Naive thymus-derived CD4-positive, alpha-beta T cell (primary cell): ENCODE measurements at regions of chr14 and their contacts with region 1.

Region 1: DNA sequence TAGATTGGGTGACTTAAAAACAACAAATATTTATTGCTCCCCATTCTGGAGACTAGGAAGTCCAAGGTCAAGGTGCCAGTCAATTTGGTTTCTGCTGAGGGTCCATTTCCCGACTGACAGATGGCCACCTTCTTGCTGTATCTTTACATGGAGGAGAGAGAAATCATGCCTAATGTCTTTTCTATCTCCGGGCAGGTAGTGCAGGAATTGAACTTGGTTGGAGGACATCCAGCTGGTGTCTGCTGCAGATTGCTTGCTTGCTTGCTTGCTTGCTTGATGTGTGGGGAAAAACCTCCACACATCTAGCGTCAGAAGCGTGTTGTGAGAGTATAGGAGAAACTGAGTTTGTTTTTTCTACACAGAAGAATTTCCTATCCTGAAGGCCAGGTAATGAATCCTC is 561.4 kb downstream of the DIO2 start:
- DNase-seq: no peak
- ATAC-seq: no peak
- H3K4me3 ChIP-seq: no peak overlapping the region
- H3K4me3 Mint-ChIP-seq: no peak overlapping the region
- H3K27ac ChIP-seq: no peak overlapping the region
- H3K27ac Mint-ChIP-seq: no peak overlapping the region
- H3K4me1 ChIP-seq: no peaks in the 10 kb centered on the region
- H3K4me1 Mint-ChIP-seq: no peaks in the 10 kb centered on the region
- H3K27me3 ChIP-seq: no peaks in the 10 kb centered on the region
- H3K27me3 Mint-ChIP-seq: no peaks in the 10 kb centered on the region

Region 2: DNA sequence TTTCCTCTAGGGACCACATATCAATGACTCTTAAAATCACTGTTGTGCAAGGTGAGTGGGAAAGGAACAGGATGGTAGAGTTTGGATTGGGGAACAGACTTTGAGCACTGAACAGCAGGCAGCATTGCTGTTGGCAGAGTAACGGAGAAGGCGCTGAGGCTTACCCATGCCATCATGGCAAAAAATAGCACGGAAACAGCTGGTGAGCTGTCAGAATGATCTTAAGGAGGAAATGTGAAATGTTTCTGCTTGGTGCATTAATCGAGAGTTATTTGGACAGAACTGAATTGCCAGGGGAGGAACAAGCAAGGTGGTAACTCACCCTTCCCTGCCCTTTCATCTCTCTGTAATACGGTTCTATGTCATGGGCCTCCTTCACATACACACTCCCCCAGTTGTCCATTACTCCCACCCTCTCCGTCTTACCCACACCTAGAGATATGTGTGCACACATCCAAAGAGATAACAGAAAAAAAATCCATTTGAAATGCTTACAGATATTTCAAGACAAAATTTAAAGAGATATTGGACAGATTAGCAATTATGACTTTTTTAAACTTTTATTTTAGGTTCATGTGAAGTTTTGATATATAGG is 11.1 kb before region 1 on chr14:
- CTCF ChIA-PET with region 1: no interaction called
- POLR2A ChIA-PET with region 1: no interaction called
- intact Hi-C with region 1: loop called in 1 of 2 experiments (anchors 1 kb)
- DNase-seq: no peak
- ATAC-seq: no peak
- H3K4me3 ChIP-seq: no peak overlapping the region
- H3K4me3 Mint-ChIP-seq: no peak overlapping the region
- H3K27ac ChIP-seq: no peak overlapping the region
- H3K27ac Mint-ChIP-seq: no peak overlapping the region
- H3K4me1 ChIP-seq: no peaks in the 10 kb centered on the region
- H3K4me1 Mint-ChIP-seq: peaks cover 0 to 2% (median 0%) of the 10 kb centered on the region in 7 donors
- H3K27me3 ChIP-seq: no peaks in the 10 kb centered on the region
- H3K27me3 Mint-ChIP-seq: no peaks in the 10 kb centered on the region